BJ (cell line): ENCODE measurements at regions of chr9 and their contacts with region 1.

Region 1: DNA sequence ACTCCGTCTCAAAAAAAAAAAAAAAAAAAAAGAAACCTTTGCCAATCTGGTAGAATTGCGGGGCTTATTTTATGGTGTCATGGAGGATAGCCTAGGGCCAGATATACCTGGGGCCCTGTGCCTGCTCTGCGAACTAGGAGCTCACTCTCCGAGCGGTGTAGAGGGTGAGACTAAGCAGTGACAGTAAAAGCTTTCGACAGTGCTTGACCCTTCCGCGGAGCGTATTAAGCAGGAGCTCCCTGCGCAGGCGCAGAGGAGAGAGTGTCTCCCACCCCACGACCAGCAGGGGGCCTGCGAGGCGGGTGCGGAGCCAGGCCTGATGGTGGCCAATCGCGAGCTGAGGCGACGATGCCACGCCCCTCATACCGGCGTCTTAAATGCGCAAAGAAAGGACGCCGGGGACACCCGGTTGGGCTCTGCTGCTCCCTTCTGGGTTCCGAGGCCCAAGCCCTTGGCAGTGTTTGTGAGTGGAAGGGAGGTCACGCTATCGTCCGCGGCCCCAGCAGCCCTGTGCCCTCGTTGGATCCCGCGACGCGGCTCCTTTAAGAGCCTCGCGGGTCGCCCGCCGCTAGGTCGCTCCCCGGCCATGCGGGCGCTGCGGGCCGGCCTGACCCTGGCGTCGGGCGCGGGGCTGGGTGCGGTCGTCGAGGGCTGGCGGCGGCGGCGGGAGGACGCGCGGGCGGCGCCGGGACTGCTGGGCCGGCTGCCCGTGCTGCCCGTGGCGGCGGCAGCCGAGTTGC is at the start of gene ENDOG:
- DNase-seq: peak; percentile 88
- H3K4me3 ChIP-seq: peak within 1 kb of the TSS; percentile 67
- H3K27me3 ChIP-seq: no peaks in the 10 kb centered on the region
- CTCF ChIP-seq: peak; percentile 100
- polyA plus RNA-seq, gene ENDOG: 13.3 and 20.7 TPM in 2 replicates

Region 2: DNA sequence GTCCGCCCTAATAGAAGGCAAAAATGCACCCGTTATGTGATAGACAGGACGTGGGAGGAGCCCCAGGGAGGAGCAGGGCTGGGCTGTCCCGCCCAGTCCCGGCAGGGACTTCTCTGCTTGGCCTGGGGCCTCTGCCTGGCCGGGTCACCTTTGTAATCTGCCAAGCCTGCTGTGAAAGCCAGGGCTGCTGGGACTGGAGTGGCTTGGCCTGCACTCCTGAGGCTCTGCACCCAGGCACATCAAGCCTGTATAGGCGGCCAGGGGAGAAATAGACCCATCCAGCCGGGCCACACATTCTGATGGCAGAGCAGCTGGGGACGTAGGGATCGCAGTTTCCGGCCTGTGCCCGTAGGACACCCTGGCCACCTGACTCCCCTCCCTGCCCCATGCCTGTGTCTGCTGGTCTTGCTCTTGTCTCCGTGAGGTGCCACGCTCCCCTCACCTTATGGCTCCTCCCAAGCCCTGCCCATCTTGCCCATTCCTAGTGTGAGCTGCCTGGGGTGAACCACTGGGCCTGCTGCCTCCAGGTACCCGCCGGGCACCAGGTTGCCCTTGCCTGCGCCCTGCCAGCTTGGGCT is 189.7 kb before region 1 on chr9:
- CTCF ChIA-PET with region 1: no interaction called
- POLR2A ChIA-PET with region 1: no interaction called
- DNase-seq: no peak
- H3K4me3 ChIP-seq: no peak overlapping the region
- H3K27me3 ChIP-seq: no peaks in the 10 kb centered on the region
- CTCF ChIP-seq: no peak

Region 3: GRCh38 chr9:128802482-128802881 is 15.8 kb before region 1 on chr9:
- CTCF ChIA-PET with region 1: interaction called, 14 read pairs
- POLR2A ChIA-PET with region 1: no interaction called
- DNase-seq: no peak
- H3K4me3 ChIP-seq: no peak overlapping the region
- H3K27me3 ChIP-seq: no peaks in the 10 kb centered on the region
- CTCF ChIP-seq: no peak

Region 4: GRCh38 chr9:128829477-128830251 is 11.4 kb after region 1 on chr9 and contains the start of gene SPOUT1:
- CTCF ChIA-PET with region 1: interaction called, 12 read pairs
- POLR2A ChIA-PET with region 1: interaction called, 6 read pairs
- DNase-seq: peak; percentile 54
- H3K4me3 ChIP-seq: peak within 1 kb of the TSS; percentile 96
- H3K27me3 ChIP-seq: no peaks in the 10 kb centered on the region
- CTCF ChIP-seq: no peak
- polyA plus RNA-seq, gene SPOUT1: 23.7 and 45.8 TPM in 2 replicates

Region 5: DNA sequence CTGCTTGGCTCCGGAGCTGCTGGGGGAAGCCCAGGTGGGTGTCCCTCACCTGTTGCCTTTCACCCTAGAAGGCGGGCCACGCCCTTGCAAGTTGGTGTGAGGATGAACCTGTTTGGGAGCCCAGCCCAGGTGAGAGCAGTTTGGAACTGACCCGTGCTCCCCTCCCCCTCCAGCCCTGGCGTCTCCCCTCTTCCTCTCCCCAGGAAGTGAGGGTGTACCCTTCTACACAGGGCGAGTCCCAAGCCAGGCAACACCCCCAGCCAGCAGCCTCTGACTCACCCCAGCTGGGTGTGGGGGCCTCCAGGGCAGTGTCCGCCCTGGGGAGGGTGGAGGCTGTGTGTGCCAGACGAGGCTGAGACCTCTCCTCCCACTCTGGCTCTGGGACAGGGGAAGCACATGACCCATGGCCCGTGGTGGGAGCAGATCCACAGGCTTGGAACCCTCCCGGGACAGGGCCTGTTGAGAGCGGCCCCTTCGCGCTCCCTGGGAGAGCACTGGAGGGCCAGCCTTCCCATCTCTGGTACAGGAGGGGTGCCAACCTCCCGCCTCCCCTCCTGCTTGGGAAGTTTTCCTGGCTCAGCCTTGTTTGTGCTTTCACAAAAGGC is 74.2 kb after region 1 on chr9:
- CTCF ChIA-PET with region 1: no interaction called
- POLR2A ChIA-PET with region 1: no interaction called
- DNase-seq: peak; percentile 74
- H3K4me3 ChIP-seq: peak overlapping the region; percentile 12
- H3K27me3 ChIP-seq: no peaks in the 10 kb centered on the region
- CTCF ChIP-seq: no peak